ENCODE measurements at regions of chr13 and their contacts with region 1.

Region 1: DNA sequence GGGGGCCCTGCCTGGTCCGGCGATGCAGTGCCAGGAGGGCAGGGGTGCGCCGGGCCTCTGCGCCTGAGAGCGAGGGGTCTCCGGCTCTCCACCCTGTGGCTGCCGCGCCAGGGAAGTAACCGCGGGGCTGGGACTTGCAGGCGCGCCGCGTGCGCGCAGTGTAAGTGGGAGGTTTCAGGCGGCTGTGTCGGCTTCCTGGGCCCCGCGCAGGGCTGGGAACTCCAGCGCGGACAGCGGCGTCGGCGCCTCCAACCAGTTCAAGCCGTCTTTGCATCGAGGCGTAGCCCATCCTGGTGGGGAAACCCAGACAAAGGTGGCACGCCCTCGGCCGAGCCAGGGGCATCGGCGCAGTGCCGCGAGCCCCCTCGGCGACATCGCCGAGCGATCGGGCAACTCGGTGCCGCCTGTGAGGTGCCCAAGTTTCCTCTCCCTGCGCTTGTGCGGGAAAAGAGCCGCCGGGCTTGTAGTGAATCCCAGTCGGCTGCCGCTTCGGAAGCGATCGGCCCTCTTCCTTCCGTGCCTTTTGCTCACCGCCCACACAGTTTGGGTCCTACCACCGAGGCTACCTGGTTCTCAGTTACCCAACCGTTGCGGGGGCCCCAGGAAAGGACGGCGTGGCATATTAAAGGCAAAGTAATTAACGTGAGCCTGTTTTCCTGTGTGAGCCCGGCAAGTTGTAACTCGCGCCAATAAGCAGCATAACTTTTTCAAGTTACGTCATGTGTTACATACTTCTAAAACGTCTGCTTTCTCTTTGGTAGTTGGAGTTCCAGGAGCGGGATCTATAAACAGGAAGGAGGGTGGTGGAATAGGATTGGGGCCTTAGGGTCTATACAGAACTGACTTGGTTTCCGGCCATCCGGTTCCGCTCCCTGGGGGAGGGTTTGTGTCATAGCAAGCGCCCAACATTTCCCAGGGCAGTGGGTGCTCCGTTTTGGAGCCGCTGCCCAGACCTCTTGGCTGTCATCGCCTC is 1.2 kb downstream of the LRCH1 start:
- DNase-seq: peak; percentile 88
- ATAC-seq: peak; percentile 56
- H3K4me3 ChIP-seq: peak overlapping the region; percentile 87 to 97 (median 95)
- H3K4me3 Mint-ChIP-seq: peak overlapping the region; percentile 95
- H3K27ac ChIP-seq: peak overlapping the region; percentile 89 to 95
- H3K27ac Mint-ChIP-seq: peak overlapping the region; percentile 93
- H3K4me1 ChIP-seq: peaks cover 32 to 34% of the 10 kb centered on the region in 2 donors
- H3K4me1 Mint-ChIP-seq: peaks cover 55% of the 10 kb centered on the region
- H3K27me3 ChIP-seq: no peaks in the 10 kb centered on the region
- H3K27me3 Mint-ChIP-seq: no peaks in the 10 kb centered on the region
- CTCF ChIP-seq: peak; percentile 35

Region 2: DNA sequence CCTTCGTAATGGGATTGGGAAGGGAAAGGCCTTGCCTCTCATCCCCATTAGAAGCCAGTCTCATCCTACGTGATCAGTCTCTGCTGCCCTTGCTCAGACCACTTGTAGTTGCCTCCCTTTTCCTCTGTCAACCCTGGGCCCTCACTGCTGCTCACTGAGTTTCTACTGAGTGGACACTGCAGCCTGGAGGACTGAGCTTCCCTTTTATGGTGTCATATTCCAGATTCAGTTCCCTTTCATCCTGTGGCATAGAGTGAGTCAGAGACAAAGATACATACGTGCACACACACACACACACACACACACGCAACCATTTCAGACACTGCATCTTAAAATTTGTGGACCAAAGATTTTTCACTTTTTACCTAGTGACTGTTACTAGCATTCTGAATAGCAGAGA is 1032.9 kb before region 1 on chr13:
- CTCF ChIA-PET with region 1: no interaction called
- POLR2A ChIA-PET with region 1: no interaction called
- intact Hi-C with region 1: no loop called
- DNase-seq: no peak
- ATAC-seq: no peak
- H3K4me3 ChIP-seq: no peak overlapping the region
- H3K4me3 Mint-ChIP-seq: no peak overlapping the region
- H3K27ac ChIP-seq: no peak overlapping the region
- H3K27ac Mint-ChIP-seq: no peak overlapping the region
- H3K4me1 ChIP-seq: no peaks in the 10 kb centered on the region
- H3K4me1 Mint-ChIP-seq: no peaks in the 10 kb centered on the region
- H3K27me3 ChIP-seq: no peaks in the 10 kb centered on the region
- H3K27me3 Mint-ChIP-seq: no peaks in the 10 kb centered on the region
- CTCF ChIP-seq: no peak

Region 3: DNA sequence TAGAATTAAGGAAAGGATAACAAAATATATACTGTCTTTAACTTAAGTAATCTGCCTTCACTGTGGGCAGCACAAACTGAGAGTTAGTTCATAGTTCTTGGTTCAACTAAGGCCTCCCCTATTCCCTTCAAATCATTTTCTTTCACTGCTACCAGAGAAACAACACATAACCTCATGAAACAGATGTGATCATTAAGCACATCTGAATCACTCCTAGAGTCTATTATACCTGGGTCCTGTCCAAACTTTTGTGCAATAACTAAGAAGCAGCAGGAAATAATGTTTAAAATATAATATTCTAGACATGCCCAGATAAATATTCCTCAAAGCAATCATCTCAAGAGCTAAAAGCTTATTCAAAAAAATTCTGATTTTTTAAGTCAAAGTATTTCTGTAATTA is 564.6 kb before region 1 on chr13:
- CTCF ChIA-PET with region 1: no interaction called
- POLR2A ChIA-PET with region 1: no interaction called
- intact Hi-C with region 1: no loop called
- DNase-seq: no peak
- ATAC-seq: no peak
- H3K4me3 ChIP-seq: no peak overlapping the region
- H3K4me3 Mint-ChIP-seq: no peak overlapping the region
- H3K27ac ChIP-seq: no peak overlapping the region
- H3K27ac Mint-ChIP-seq: no peak overlapping the region
- H3K4me1 ChIP-seq: no peaks in the 10 kb centered on the region
- H3K4me1 Mint-ChIP-seq: no peaks in the 10 kb centered on the region
- H3K27me3 ChIP-seq: no peaks in the 10 kb centered on the region
- H3K27me3 Mint-ChIP-seq: no peaks in the 10 kb centered on the region
- CTCF ChIP-seq: no peak

Region 4: GRCh38 chr13:46184277-46184699 is 369.9 kb before region 1 on chr13:
- CTCF ChIA-PET with region 1: interaction called, 6 read pairs
- POLR2A ChIA-PET with region 1: no interaction called
- intact Hi-C with region 1: loop called (anchors 5 kb)
- DNase-seq: peak; percentile 88
- ATAC-seq: peak; percentile 48
- H3K4me3 ChIP-seq: peak overlapping the region in 4 of 5 experiments; percentile 19 to 99 (median 48)
- H3K4me3 Mint-ChIP-seq: peak overlapping the region; percentile 98
- H3K27ac ChIP-seq: peak overlapping the region; percentile 84 to 91
- H3K27ac Mint-ChIP-seq: peak overlapping the region; percentile 96
- H3K4me1 ChIP-seq: peaks cover 26 to 27% of the 10 kb centered on the region in 2 donors
- H3K4me1 Mint-ChIP-seq: peaks cover 45% of the 10 kb centered on the region
- H3K27me3 ChIP-seq: no peaks in the 10 kb centered on the region
- H3K27me3 Mint-ChIP-seq: no peaks in the 10 kb centered on the region
- CTCF ChIP-seq: peak; percentile 83

Region 5: GRCh38 chr13:46542833-46543232 is 11.3 kb before region 1 on chr13:
- CTCF ChIA-PET with region 1: interaction called, 11 read pairs
- POLR2A ChIA-PET with region 1: no interaction called
- intact Hi-C with region 1: no loop called
- DNase-seq: no peak
- ATAC-seq: no peak
- H3K4me3 ChIP-seq: no peak overlapping the region
- H3K4me3 Mint-ChIP-seq: no peak overlapping the region
- H3K27ac ChIP-seq: no peak overlapping the region
- H3K27ac Mint-ChIP-seq: no peak overlapping the region
- H3K4me1 ChIP-seq: no peaks in the 10 kb centered on the region
- H3K4me1 Mint-ChIP-seq: peaks cover 4% of the 10 kb centered on the region
- H3K27me3 ChIP-seq: no peaks in the 10 kb centered on the region
- H3K27me3 Mint-ChIP-seq: peaks cover 2% of the 10 kb centered on the region
- CTCF ChIP-seq: no peak

Region 6: DNA sequence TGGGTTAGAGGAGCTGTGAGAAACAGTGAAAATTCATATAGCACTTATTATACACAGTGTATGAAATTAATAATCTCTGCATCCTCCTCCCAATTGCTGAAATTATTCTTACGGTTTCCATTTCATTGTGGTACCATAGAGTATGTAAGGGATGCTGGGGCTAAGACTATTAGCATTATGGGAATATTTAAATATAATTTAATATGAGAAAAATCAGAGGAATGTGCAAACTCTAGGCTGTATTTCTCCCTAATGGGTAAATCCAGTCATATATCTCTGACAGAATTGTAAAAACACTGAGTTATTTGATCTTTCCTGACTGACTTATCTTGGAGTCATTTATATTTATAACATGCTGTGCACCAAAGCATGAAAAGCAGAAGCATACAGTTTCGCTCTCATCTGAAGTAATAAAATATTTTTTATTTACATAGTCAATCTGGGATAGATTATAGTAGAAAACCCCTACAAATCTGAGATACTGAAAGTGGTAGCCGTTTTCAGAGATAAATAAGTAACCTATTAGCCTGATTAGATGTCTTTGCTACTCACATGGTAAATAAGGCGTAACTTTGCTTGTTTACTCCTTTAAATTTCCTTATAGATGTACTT is 33.7 kb after region 1 on chr13:
- CTCF ChIA-PET with region 1: interaction called, 32 read pairs
- POLR2A ChIA-PET with region 1: no interaction called
- intact Hi-C with region 1: no loop called
- DNase-seq: peak; percentile 59
- ATAC-seq: peak; percentile 68
- H3K4me3 ChIP-seq: peak overlapping the region; percentile 18 to 55 (median 30)
- H3K4me3 Mint-ChIP-seq: peak overlapping the region; percentile 68
- H3K27ac ChIP-seq: peak overlapping the region; percentile 49 to 78
- H3K27ac Mint-ChIP-seq: peak overlapping the region; percentile 80
- H3K4me1 ChIP-seq: peaks cover 81 to 87% of the 10 kb centered on the region in 2 donors
- H3K4me1 Mint-ChIP-seq: peaks cover 90% of the 10 kb centered on the region
- H3K27me3 ChIP-seq: no peaks in the 10 kb centered on the region
- H3K27me3 Mint-ChIP-seq: no peaks in the 10 kb centered on the region
- CTCF ChIP-seq: no peak

Region 7: DNA sequence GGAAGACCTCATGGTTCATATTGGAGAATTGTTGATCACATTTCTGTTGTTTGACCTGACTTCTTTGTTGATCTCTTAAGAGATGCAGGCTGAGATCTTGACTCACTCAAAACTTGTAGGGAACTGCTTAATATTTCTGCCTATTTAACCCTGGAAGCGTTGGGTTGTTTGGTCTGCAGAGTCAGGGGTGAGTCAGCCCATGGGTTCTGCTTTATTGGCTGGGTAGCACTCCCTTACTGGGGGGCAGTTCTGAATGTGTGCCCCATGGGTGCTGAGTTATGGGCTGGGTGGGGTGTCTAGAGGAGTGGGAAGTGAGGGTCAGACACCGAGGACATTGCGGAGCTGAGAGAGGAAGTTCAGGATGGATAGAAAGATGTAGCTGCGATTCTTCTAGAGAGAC is 86.7 kb after region 1 on chr13:
- CTCF ChIA-PET with region 1: interaction called, 11 read pairs
- POLR2A ChIA-PET with region 1: no interaction called
- intact Hi-C with region 1: no loop called
- DNase-seq: no peak
- ATAC-seq: no peak
- H3K4me3 ChIP-seq: no peak overlapping the region
- H3K4me3 Mint-ChIP-seq: peak overlapping the region; percentile 16
- H3K27ac ChIP-seq: no peak overlapping the region
- H3K27ac Mint-ChIP-seq: peak overlapping the region; percentile 75
- H3K4me1 ChIP-seq: peaks cover 19 to 33% of the 10 kb centered on the region in 2 donors
- H3K4me1 Mint-ChIP-seq: peaks cover 81% of the 10 kb centered on the region
- H3K27me3 ChIP-seq: no peaks in the 10 kb centered on the region
- H3K27me3 Mint-ChIP-seq: no peaks in the 10 kb centered on the region
- CTCF ChIP-seq: no peak

Region 8: GRCh38 chr13:46679369-46680120 is 125.4 kb after region 1 on chr13:
- CTCF ChIA-PET with region 1: interaction called, 120 read pairs
- POLR2A ChIA-PET with region 1: interaction called, 7 read pairs
- intact Hi-C with region 1: loop called (anchors 1 kb)
- DNase-seq: peak; percentile 78
- ATAC-seq: peak; percentile 89
- H3K4me3 ChIP-seq: peak overlapping the region in 4 of 5 experiments; percentile 23 to 63 (median 44)
- H3K4me3 Mint-ChIP-seq: no peak overlapping the region
- H3K27ac ChIP-seq: peak overlapping the region; percentile 79 to 81
- H3K27ac Mint-ChIP-seq: no peak overlapping the region
- H3K4me1 ChIP-seq: peaks cover 23 to 27% of the 10 kb centered on the region in 2 donors
- H3K4me1 Mint-ChIP-seq: peaks cover 26% of the 10 kb centered on the region
- H3K27me3 ChIP-seq: no peaks in the 10 kb centered on the region
- H3K27me3 Mint-ChIP-seq: no peaks in the 10 kb centered on the region
- CTCF ChIP-seq: peak; percentile 43

Region 9: DNA sequence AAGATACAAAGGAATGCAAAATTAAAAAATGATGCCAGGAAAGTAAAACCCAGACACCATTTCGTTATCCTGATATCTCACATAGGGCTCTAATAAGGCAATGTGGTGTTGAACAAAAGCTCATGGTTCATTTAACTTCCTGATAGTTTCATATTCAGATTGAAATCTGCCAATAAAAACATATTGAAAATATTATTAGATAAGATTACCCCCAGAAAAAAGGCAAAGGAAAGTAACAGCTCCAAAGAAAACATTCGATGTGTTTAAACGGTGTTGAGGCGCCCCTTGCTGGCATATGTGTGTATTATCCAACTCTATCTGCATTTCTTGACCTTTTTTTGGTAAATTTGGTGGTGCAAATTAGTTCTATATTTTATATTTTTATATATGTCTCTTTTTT is 166.9 kb after region 1 on chr13:
- CTCF ChIA-PET with region 1: interaction called, 139 read pairs
- POLR2A ChIA-PET with region 1: interaction called, 4 read pairs
- intact Hi-C with region 1: loop called (anchors 1 kb)
- DNase-seq: peak; percentile 55
- ATAC-seq: peak; percentile 43
- H3K4me3 ChIP-seq: no peak overlapping the region
- H3K4me3 Mint-ChIP-seq: no peak overlapping the region
- H3K27ac ChIP-seq: no peak overlapping the region
- H3K27ac Mint-ChIP-seq: no peak overlapping the region
- H3K4me1 ChIP-seq: no peaks in the 10 kb centered on the region
- H3K4me1 Mint-ChIP-seq: peaks cover 4% of the 10 kb centered on the region
- H3K27me3 ChIP-seq: no peaks in the 10 kb centered on the region
- H3K27me3 Mint-ChIP-seq: no peaks in the 10 kb centered on the region
- CTCF ChIP-seq: peak; percentile 85

Measured in B cell (primary cell).